ENCODE measurements at regions of chr6 and their contacts with region 1.

Region 1: GRCh38 chr6:10510592-10511367 is 10.4 kb upstream of the GCNT2 start:
- DNase-seq: peak; percentile 70

Region 2: GRCh38 chr6:10495029-10495428 is 15.8 kb before region 1 on chr6:
- CTCF ChIA-PET with region 1: no interaction called
- POLR2A ChIA-PET with region 1: no interaction called
- DNase-seq: no peak

Region 3: GRCh38 chr6:10521104-10521808 is 10.5 kb after region 1 on chr6 and contains the start of gene GCNT2:
- CTCF ChIA-PET with region 1: interaction called, 5 read pairs
- POLR2A ChIA-PET with region 1: interaction called, 12 read pairs
- DNase-seq: peak; percentile 65

Measured in HEK293T (cell line).